Caco-2 (cell line): ENCODE measurements at regions of chr2 and their contacts with region 1.

Region 1: DNA sequence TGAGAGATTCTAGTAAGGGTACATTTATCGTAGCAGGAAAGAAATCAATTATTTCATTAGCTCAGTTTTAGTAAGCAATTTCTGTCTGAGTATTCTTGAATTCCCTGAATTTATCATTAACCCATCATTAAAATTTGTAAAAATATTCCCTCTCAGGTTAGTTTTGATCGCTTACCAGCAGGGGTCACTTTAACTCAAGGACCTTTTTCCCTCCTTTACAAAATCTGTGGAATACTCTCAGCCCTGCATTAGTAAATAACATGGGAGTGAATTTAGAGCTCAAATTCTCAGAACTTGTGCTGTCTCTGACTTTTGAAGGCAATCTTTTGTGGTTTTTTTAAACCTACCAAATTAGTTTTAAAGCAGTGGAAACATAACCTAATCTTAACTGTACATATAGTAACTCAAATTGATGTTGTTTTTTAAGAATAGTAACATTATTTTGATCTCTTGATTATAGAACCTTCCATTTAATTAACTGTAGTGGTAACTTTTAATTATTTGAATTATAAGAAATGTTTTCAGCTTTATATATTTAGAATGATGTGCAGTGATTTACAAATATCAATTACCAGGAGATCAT is 97.2 kb downstream of the AGPS start:
- DNase-seq: peak in 1 of 2 experiments; percentile 40
- H3K4me3 ChIP-seq: no peak overlapping the region
- H3K4me3 Mint-ChIP-seq: no peak overlapping the region
- H3K27ac Mint-ChIP-seq: no peak overlapping the region
- H3K4me1 ChIP-seq: 0 out of 2 replicates have a peak, but pooled peaks cover 3% of the 10 kb centered on the region
- H3K4me1 Mint-ChIP-seq: no peaks in the 10 kb centered on the region
- H3K27me3 ChIP-seq: no peaks in the 10 kb centered on the region
- H3K27me3 Mint-ChIP-seq: no peaks in the 10 kb centered on the region
- CTCF ChIP-seq: peak; percentile 60 to 69

Region 2: GRCh38 chr2:177533253-177533652 is 43.4 kb after region 1 on chr2:
- CTCF ChIA-PET with region 1: interaction called, 10 read pairs
- POLR2A ChIA-PET with region 1: no interaction called
- intact Hi-C with region 1: no loop called
- DNase-seq: no peak
- H3K4me3 ChIP-seq: no peak overlapping the region
- H3K4me3 Mint-ChIP-seq: no peak overlapping the region
- H3K27ac Mint-ChIP-seq: no peak overlapping the region
- H3K4me1 ChIP-seq: 0 out of 2 replicates have a peak, but pooled peaks cover 12% of the 10 kb centered on the region
- H3K4me1 Mint-ChIP-seq: peaks cover 4% of the 10 kb centered on the region
- H3K27me3 ChIP-seq: no peaks in the 10 kb centered on the region
- H3K27me3 Mint-ChIP-seq: no peaks in the 10 kb centered on the region
- CTCF ChIP-seq: no peak